ENCODE measurements at regions of chr2 and their contacts with region 1.

Region 1: DNA sequence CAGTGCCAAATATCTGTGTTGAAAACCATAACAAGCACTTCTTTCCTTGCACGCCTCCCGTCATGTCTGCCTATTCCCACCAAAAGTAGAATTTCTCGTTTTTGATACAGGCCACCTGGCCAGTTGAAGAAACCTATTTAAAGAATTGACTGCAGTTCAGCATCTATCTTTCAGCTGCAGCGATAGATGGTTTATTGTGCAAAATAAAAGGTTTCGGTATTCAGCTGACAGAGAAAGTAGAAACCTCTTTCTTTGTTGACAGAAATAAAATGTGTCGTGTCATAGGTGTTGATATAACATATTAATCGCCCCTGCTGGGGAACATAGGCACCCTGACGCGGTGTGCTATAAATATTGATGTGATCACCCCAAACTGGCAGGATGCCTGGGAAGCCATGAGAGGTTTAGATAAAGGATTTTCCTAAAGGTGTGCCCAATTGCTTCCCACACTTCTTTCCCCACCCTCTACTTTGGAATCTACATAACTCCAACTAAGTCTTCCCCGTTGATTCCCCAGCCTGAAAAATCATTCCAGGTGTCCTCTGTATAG is 570.4 kb downstream of the CCDC85A start:
- DNase-seq: no peak
- ATAC-seq: no peak
- H3K4me3 ChIP-seq: no peak overlapping the region
- H3K27ac ChIP-seq: no peak overlapping the region
- H3K4me1 ChIP-seq: no peaks in the 10 kb centered on the region
- H3K27me3 ChIP-seq: no peaks in the 10 kb centered on the region
- CTCF ChIP-seq: no peak

Region 2: GRCh38 chr2:56183643-56184499 is 570.3 kb before region 1 on chr2 and contains the start of gene CCDC85A:
- intact Hi-C with region 1: loop called in 2 of 3 experiments (anchors 5 to 10 kb)
- DNase-seq: peak; percentile 77 to 97 (median 89)
- ATAC-seq: peak; percentile 94 to 97 (median 96)
- H3K4me3 ChIP-seq: peak within 1 kb of the TSS; percentile 52 to 77 (median 64)
- H3K27ac ChIP-seq: no peak within 1 kb of the TSS
- H3K4me1 ChIP-seq: peaks cover 0 to 6% (median 0%) of the 10 kb centered on the region in 3 donors
- H3K27me3 ChIP-seq: no peaks in the 10 kb centered on the region
- CTCF ChIP-seq: peak; percentile 90 to 94 (median 94)
- total RNA-seq, gene CCDC85A: 0.20 to 0.62 (median 0.31) TPM